K562 (cell line): ENCODE measurements at regions of chr15 and their contacts with region 1.

Region 1: GRCh38 chr15:75625542-75626347 is at the start of gene SNUPN:
- DNase-seq: peak; percentile 95 to 99 (median 96)
- ATAC-seq: peak; percentile 91
- H3K4me3 ChIP-seq: peak within 1 kb of the TSS; percentile 99
- H3K27ac ChIP-seq: peak within 1 kb of the TSS; percentile 91
- H3K4me1 ChIP-seq: peaks cover 20 to 23% of the 10 kb centered on the region in 2 experiments
- H3K27me3 ChIP-seq: no peaks in the 10 kb centered on the region
- CTCF ChIP-seq: no peak
- EP300 ChIP-seq: peak; percentile 77; the same call in 1 of the 2 replicates
- POLR2A ChIP-seq: peak; percentile 92
- RAD21 ChIP-seq: no peak
- polyA plus RNA-seq, gene SNUPN: 69.3 to 78.3 TPM

Region 2: GRCh38 chr15:75647370-75648155 is 21.8 kb after region 1 on chr15 and contains the start of gene SNX33:
- CTCF ChIA-PET with region 1: no interaction called
- POLR2A ChIA-PET with region 1: interaction called, 16 read pairs
- in situ Hi-C with region 1: no loop called
- intact Hi-C with region 1: no loop called
- DNase-seq: peak; percentile 83 to 90 (median 88)
- ATAC-seq: peak; percentile 77
- H3K4me3 ChIP-seq: peak within 1 kb of the TSS; percentile 79
- H3K27ac ChIP-seq: peak within 1 kb of the TSS; percentile 81
- H3K4me1 ChIP-seq: peaks cover 48 to 59% of the 10 kb centered on the region in 2 experiments
- H3K27me3 ChIP-seq: no peaks in the 10 kb centered on the region
- CTCF ChIP-seq: peak; percentile 64 to 76 (median 69)
- EP300 ChIP-seq: no peak
- POLR2A ChIP-seq: peak; percentile 75
- RAD21 ChIP-seq: peak; percentile 13 to 34; a peak in 2 of 4 replicates
- polyA plus RNA-seq, gene SNX33: 1.4 to 1.8 TPM